A673 (cell line): ENCODE measurements at regions of chr3 and their contacts with region 1.

Region 1: DNA sequence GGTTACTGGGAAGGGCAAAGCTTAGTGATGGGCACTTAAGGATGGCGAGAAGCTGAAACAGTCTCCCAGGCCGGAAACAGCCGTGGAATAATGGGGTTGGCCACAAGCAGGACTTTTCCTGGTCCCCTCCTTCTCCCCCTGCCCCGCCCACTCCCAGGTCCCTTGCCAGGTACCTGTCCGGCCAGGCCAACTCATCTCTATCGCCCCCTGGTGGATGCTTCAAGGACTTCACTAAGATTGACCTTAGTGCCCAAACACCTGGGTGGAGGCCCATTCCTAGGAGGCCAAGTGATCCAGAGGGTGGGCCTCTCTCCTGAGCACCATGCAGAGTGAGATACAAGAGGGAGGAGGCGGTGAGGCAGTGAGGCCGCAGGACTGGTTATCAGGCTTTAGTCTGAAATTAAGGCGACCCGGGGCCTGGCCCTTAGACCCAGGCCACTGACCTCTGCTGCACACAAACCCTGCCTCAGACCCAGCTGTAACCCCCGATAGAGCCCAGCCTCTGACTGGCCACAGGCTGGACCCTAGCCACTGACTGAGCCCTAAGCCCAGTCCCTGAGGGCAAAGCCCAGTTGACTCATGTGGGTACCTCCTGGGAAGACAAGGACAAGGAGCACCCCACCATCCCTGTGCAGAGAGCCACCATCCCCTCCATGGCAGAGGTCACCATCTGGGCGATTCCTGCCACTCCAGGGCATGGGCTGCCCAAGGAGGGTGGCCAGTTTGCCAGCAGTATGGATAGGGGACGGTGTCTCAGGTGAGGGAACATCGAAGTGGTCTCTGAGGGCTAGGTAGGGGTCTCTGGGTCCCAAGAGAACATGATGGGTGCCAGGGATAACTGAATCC is 37.6 kb downstream of the VIPR1 start:
- DNase-seq: peak; percentile 1
- H3K4me3 ChIP-seq: no peak overlapping the region
- H3K27ac ChIP-seq: no peak overlapping the region
- H3K4me1 ChIP-seq: no peaks in the 10 kb centered on the region
- H3K27me3 ChIP-seq: no peaks in the 10 kb centered on the region
- CTCF ChIP-seq: peak; percentile 65

Region 2: DNA sequence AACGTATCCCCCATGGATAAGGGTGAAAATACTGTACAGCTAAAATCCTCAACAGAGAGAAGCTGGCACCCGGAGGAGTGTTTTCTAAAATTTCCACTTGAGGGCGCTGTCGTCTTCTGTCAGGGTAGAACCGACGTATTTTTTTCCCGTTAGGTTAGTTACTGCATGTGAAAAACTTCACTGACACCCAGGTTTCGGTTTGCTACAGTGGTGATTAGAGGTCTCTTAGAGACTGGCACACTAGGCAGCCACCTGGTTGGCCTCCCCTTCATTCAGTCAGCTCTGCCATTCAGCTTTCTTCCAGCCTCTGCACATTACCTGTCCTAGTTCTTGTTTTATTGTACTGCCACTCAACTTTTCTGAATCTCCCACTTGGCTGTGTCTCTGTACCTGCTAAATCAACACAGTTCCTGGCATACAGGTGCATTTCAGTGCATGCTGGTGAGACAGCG is 292.5 kb before region 1 on chr3:
- CTCF ChIA-PET with region 1: no interaction called
- POLR2A ChIA-PET with region 1: no interaction called
- intact Hi-C with region 1: loop called (anchors 5 kb)
- DNase-seq: peak; percentile 62
- H3K4me3 ChIP-seq: no peak overlapping the region
- H3K27ac ChIP-seq: no peak overlapping the region
- H3K4me1 ChIP-seq: no peaks in the 10 kb centered on the region
- H3K27me3 ChIP-seq: no peaks in the 10 kb centered on the region
- CTCF ChIP-seq: peak; percentile 63

Region 3: GRCh38 chr3:42502429-42503250 is 37.5 kb before region 1 on chr3 and contains the start of gene VIPR1:
- CTCF ChIA-PET with region 1: interaction called, 3 read pairs
- POLR2A ChIA-PET with region 1: no interaction called
- intact Hi-C with region 1: loop called (anchors 5 kb)
- DNase-seq: peak; percentile 70
- H3K4me3 ChIP-seq: peak within 1 kb of the TSS; percentile 41
- H3K27ac ChIP-seq: no peak within 1 kb of the TSS
- H3K4me1 ChIP-seq: no peaks in the 10 kb centered on the region
- H3K27me3 ChIP-seq: peaks cover 3% of the 10 kb centered on the region
- CTCF ChIP-seq: no peak
- total RNA-seq, gene VIPR1: 0.26 and 0.31 TPM in 2 replicates